CD4-positive, alpha-beta memory T cell (primary cell): ENCODE measurements at regions of chr15 and their contacts with region 1.

Region 1: GRCh38 chr15:60695713-60696522 is 217.0 kb upstream of the ICE2 start:
- DNase-seq: peak in 4 of 5 donors; percentile 18 to 79 (median 29)
- H3K4me3 ChIP-seq: peak overlapping the region; percentile 29 to 43
- H3K4me3 Mint-ChIP-seq: peak overlapping the region; percentile 48 to 87 (median 84)
- H3K27ac ChIP-seq: peak overlapping the region; percentile 37
- H3K27ac Mint-ChIP-seq: peak overlapping the region; percentile 55 to 95 (median 92)
- H3K4me1 ChIP-seq: peaks cover 67% of the 10 kb centered on the region
- H3K4me1 Mint-ChIP-seq: peaks cover 68 to 84% (median 78%) of the 10 kb centered on the region in 4 donors
- H3K27me3 ChIP-seq: no peaks in the 10 kb centered on the region
- H3K27me3 Mint-ChIP-seq: no peaks in the 10 kb centered on the region

Region 2: DNA sequence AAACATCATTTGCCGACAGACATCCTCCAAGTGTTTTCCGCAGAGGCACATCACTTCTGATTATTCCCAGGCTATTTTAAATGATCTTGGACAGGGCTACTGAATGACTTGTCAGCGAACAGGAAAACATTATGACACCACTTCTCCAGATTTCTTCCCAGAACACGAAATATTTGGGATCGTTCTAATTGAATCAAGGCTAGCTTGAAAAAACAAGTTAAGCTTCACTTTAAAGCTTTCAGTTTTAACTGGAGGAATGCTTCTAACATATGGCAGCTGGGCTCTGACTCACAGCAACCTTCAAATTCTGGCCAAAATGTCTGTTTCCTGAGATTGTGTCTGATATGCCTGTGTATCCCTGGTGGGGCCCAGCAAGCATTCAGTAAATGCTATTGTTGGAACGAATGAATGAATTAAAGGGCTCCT is 90.0 kb before region 1 on chr15:
- CTCF ChIA-PET with region 1: no interaction called
- POLR2A ChIA-PET with region 1: no interaction called
- intact Hi-C with region 1: no loop called
- DNase-seq: no peak
- H3K4me3 ChIP-seq: no peak overlapping the region
- H3K4me3 Mint-ChIP-seq: no peak overlapping the region
- H3K27ac ChIP-seq: no peak overlapping the region
- H3K27ac Mint-ChIP-seq: no peak overlapping the region
- H3K4me1 ChIP-seq: peaks cover 8% of the 10 kb centered on the region
- H3K4me1 Mint-ChIP-seq: peaks cover 11 to 15% (median 13%) of the 10 kb centered on the region in 4 donors
- H3K27me3 ChIP-seq: no peaks in the 10 kb centered on the region
- H3K27me3 Mint-ChIP-seq: no peaks in the 10 kb centered on the region

Region 3: GRCh38 chr15:60708684-60709083 is 12.8 kb after region 1 on chr15:
- CTCF ChIA-PET with region 1: interaction called, 3 read pairs
- POLR2A ChIA-PET with region 1: interaction called, 29 read pairs
- intact Hi-C with region 1: no loop called
- DNase-seq: no peak
- H3K4me3 ChIP-seq: no peak overlapping the region
- H3K4me3 Mint-ChIP-seq: peak overlapping the region in 4 of 8 donors; percentile 0 to 48 (median 6)
- H3K27ac ChIP-seq: no peak overlapping the region
- H3K27ac Mint-ChIP-seq: peak overlapping the region in 3 of 7 donors; percentile 19 to 62 (median 41)
- H3K4me1 ChIP-seq: peaks cover 38% of the 10 kb centered on the region
- H3K4me1 Mint-ChIP-seq: peaks cover 35 to 53% (median 41%) of the 10 kb centered on the region in 4 donors
- H3K27me3 ChIP-seq: no peaks in the 10 kb centered on the region
- H3K27me3 Mint-ChIP-seq: no peaks in the 10 kb centered on the region

Region 4: DNA sequence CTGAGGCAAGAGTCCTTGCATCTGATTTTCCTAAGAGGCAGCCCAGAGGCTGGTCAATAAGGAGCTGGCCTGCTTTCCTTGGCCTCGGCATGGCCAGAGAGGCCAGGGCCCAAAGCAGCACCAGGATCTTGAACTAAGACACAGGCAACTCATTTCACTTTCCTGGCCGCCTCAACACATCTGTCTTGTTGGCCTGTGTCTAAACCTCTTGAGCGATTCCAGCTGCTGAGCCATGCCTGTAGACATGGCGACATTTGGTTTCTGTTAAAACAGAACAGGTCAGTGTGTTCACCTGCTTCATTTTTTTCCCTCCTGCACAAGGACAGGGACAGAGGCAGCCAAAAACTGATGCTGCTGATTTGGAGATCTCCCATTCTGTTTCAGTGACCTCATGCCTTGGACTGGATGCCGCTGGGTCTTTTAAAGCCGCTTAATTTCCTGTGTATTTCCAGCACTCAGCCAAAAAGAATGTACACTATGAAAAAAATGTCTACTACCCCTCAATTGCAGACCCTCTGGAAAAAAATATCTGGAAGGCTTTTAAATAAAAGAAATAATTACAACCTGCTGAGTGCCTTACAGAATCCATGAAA is 49.6 kb after region 1 on chr15:
- CTCF ChIA-PET with region 1: interaction called, 3 read pairs
- POLR2A ChIA-PET with region 1: no interaction called
- intact Hi-C with region 1: loop called (anchors 10 kb)
- DNase-seq: no peak
- H3K4me3 ChIP-seq: no peak overlapping the region
- H3K4me3 Mint-ChIP-seq: no peak overlapping the region
- H3K27ac ChIP-seq: no peak overlapping the region
- H3K27ac Mint-ChIP-seq: peak overlapping the region in 2 of 7 donors; percentile 52 to 77
- H3K4me1 ChIP-seq: peaks cover 11% of the 10 kb centered on the region
- H3K4me1 Mint-ChIP-seq: peaks cover 13 to 26% (median 20%) of the 10 kb centered on the region in 4 donors
- H3K27me3 ChIP-seq: no peaks in the 10 kb centered on the region
- H3K27me3 Mint-ChIP-seq: no peaks in the 10 kb centered on the region

Region 5: GRCh38 chr15:61146931-61147230 is 451.0 kb after region 1 on chr15:
- CTCF ChIA-PET with region 1: no interaction called
- POLR2A ChIA-PET with region 1: no interaction called
- intact Hi-C with region 1: no loop called
- DNase-seq: no peak
- H3K4me3 ChIP-seq: no peak overlapping the region
- H3K4me3 Mint-ChIP-seq: no peak overlapping the region
- H3K27ac ChIP-seq: no peak overlapping the region
- H3K27ac Mint-ChIP-seq: no peak overlapping the region
- H3K4me1 ChIP-seq: no peaks in the 10 kb centered on the region
- H3K4me1 Mint-ChIP-seq: peaks cover 0 to 3% (median 0%) of the 10 kb centered on the region in 4 donors
- H3K27me3 ChIP-seq: peaks cover 10% of the 10 kb centered on the region
- H3K27me3 Mint-ChIP-seq: peaks cover 14 to 32% of the 10 kb centered on the region in 2 donors